HCT116 (cell line): ENCODE measurements at regions of chr2 and their contacts with region 1.

Region 1: DNA sequence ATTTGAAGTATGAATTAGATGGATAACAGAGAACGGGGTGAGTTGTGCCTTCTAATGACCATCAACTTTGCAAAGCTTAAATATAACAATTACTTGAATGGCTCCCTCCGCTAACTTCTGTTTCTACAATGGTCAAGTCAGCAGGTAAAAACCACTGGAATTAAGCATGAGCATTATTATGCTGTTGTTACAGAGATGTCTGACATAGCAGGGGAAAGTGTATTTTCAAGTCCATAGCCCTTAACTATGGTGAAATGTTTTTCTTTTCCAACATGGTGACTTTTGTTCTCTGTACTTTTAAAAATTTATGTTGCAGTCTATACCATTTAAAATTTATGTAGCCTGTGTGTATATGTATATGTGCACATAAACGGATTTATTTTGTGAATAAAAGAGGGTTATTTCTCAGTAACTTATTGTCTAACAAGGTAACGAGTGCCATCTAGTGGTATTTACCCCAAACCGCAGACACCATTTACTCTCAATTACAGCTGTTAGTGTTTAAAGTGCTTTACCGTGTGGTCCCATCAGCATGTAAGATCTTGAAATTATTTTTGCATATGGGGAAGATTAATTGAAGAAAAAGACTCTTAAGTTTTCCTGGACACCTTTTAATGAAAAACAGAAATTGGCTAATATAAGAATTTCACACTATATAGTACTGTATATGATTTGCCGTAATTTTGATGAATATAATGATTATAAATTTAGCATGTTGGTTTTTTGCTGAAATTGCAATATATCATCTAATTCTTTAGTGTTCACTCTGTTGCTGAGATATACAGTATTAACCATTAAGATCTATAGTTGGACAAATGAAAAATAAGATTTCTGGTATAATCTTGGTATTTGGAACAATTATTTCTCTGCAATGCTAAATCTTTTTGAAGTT is 78.2 kb downstream of the UBE2E3 start:
- DNase-seq: peak; percentile 47
- ATAC-seq: peak; percentile 63; the same call in 1 of the 2 replicates
- H3K4me3 ChIP-seq: no peak overlapping the region
- H3K27ac ChIP-seq: no peak overlapping the region
- H3K4me1 ChIP-seq: no peaks in the 10 kb centered on the region
- H3K27me3 ChIP-seq: no peaks in the 10 kb centered on the region
- CTCF ChIP-seq: peak; percentile 62 to 89 (median 64); a peak in 5 of 6 replicates
- POLR2A ChIP-seq: no peak
- RAD21 ChIP-seq: peak; percentile 86

Region 2: DNA sequence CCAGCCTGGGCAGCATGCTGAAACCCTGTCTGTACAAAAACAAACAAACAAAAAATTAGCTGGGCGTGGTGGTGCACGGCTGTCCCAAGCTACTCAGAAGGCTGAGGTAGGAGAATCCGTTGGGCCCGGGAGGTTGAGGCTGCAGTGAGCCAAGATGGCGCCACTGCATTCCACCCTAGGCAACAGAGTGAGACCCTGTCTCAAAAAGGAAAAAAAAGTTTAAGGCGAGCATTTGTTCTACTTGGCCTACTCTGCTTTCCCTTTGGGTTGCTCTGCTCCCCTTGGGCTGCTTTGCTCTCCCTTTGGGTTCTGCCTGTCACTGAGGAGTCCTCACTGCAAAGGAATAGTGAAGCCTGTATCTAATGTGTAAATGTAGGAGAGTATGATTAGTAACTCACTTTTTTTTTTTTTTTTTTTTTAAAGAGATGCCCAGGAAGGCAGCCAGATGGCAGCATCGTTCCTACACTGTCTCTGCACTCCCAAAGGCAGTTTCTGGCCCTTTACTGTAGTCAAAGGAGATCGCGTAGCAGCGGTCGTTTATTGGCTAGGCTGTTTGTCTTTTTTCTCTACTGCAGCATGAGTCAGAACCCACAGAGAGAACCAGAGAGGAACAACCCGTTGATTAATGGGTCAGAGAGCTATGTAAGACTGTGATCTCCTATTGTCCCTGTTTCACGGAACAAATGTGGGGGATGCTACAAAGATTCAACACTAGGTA is 933.2 kb before region 1 on chr2:
- CTCF ChIA-PET with region 1: interaction called, 13 read pairs
- POLR2A ChIA-PET with region 1: no interaction called
- RAD21 ChIA-PET with region 1: interaction called in 1 of 2 experiments, 3 read pairs
- intact Hi-C with region 1: loop called (anchors 1 kb)
- DNase-seq: peak; percentile 84
- ATAC-seq: peak; percentile 92
- H3K4me3 ChIP-seq: 0 out of 4 replicates have a peak overlapping the region, but pooled peaks of 1 of the 2 experiments have one; percentile 9
- H3K27ac ChIP-seq: no peak overlapping the region
- H3K4me1 ChIP-seq: peaks cover 0 to 14% of the 10 kb centered on the region in 2 experiments; a peak in 2 of 4 replicates
- H3K27me3 ChIP-seq: no peaks in the 10 kb centered on the region
- CTCF ChIP-seq: peak; percentile 65 to 75 (median 72); a peak in 5 of 6 replicates
- POLR2A ChIP-seq: no peak
- RAD21 ChIP-seq: peak; percentile 90

Region 3: GRCh38 chr2:180240774-180241173 is 817.9 kb before region 1 on chr2:
- CTCF ChIA-PET with region 1: no interaction called
- POLR2A ChIA-PET with region 1: no interaction called
- RAD21 ChIA-PET with region 1: no interaction called
- intact Hi-C with region 1: loop called (anchors 1 kb)
- DNase-seq: peak; percentile 10
- ATAC-seq: peak; percentile 67
- H3K4me3 ChIP-seq: no peak overlapping the region
- H3K27ac ChIP-seq: no peak overlapping the region
- H3K4me1 ChIP-seq: no peaks in the 10 kb centered on the region
- H3K27me3 ChIP-seq: no peaks in the 10 kb centered on the region
- CTCF ChIP-seq: peak; percentile 14 to 45 (median 37); a peak in 4 of 6 replicates
- POLR2A ChIP-seq: no peak
- RAD21 ChIP-seq: peak; percentile 73

Region 4: GRCh38 chr2:180359522-180360282 is 698.9 kb before region 1 on chr2:
- CTCF ChIA-PET with region 1: no interaction called
- POLR2A ChIA-PET with region 1: no interaction called
- RAD21 ChIA-PET with region 1: no interaction called
- intact Hi-C with region 1: loop called (anchors 10 kb)
- DNase-seq: peak; percentile 8
- ATAC-seq: peak; percentile 53; the same call in 1 of the 2 replicates
- H3K4me3 ChIP-seq: no peak overlapping the region
- H3K27ac ChIP-seq: no peak overlapping the region
- H3K4me1 ChIP-seq: no peaks in the 10 kb centered on the region
- H3K27me3 ChIP-seq: no peaks in the 10 kb centered on the region
- CTCF ChIP-seq: peak in 2 of 3 experiments; percentile 49 to 64; a peak in 4 of 6 replicates
- POLR2A ChIP-seq: no peak
- RAD21 ChIP-seq: no peak; the same call in 1 of the 2 replicates

Region 5: GRCh38 chr2:180520206-180520605 is 538.4 kb before region 1 on chr2:
- CTCF ChIA-PET with region 1: interaction called, 8 read pairs
- POLR2A ChIA-PET with region 1: no interaction called
- RAD21 ChIA-PET with region 1: interaction called in 1 of 2 experiments, 5 read pairs
- intact Hi-C with region 1: loop called (anchors 2 kb)
- DNase-seq: peak; percentile 33
- ATAC-seq: peak; percentile 70
- H3K4me3 ChIP-seq: no peak overlapping the region
- H3K27ac ChIP-seq: no peak overlapping the region
- H3K4me1 ChIP-seq: peaks cover 6 to 58% of the 10 kb centered on the region in 2 experiments; a peak in 3 of 4 replicates
- H3K27me3 ChIP-seq: no peaks in the 10 kb centered on the region
- CTCF ChIP-seq: peak; percentile 11 to 25 (median 18); a peak in 1 of 6 replicates
- POLR2A ChIP-seq: no peak
- RAD21 ChIP-seq: peak; percentile 62

Region 6: GRCh38 chr2:180607514-180608049 is 451.0 kb before region 1 on chr2:
- CTCF ChIA-PET with region 1: interaction called, 3 read pairs
- POLR2A ChIA-PET with region 1: no interaction called
- RAD21 ChIA-PET with region 1: no interaction called
- intact Hi-C with region 1: loop called (anchors 2 kb)
- DNase-seq: no peak
- ATAC-seq: no peak
- H3K4me3 ChIP-seq: no peak overlapping the region
- H3K27ac ChIP-seq: no peak overlapping the region
- H3K4me1 ChIP-seq: no peaks in the 10 kb centered on the region
- H3K27me3 ChIP-seq: no peaks in the 10 kb centered on the region
- CTCF ChIP-seq: no peak
- POLR2A ChIP-seq: no peak
- RAD21 ChIP-seq: no peak

Region 7: GRCh38 chr2:180980106-180980942 is 78.3 kb before region 1 on chr2 and contains the start of gene UBE2E3:
- CTCF ChIA-PET with region 1: no interaction called
- POLR2A ChIA-PET with region 1: no interaction called
- RAD21 ChIA-PET with region 1: no interaction called
- intact Hi-C with region 1: loop called (anchors 1 kb)
- DNase-seq: peak; percentile 48
- ATAC-seq: peak; percentile 86
- H3K4me3 ChIP-seq: peak within 1 kb of the TSS; percentile 87 to 88
- H3K27ac ChIP-seq: peak within 1 kb of the TSS; percentile 56
- H3K4me1 ChIP-seq: peaks cover 19 to 34% of the 10 kb centered on the region in 2 experiments; a peak in 3 of 4 replicates
- H3K27me3 ChIP-seq: no peaks in the 10 kb centered on the region
- CTCF ChIP-seq: peak in 2 of 3 experiments; percentile 62 to 65; a peak in 4 of 6 replicates
- POLR2A ChIP-seq: no peak
- RAD21 ChIP-seq: peak; percentile 34; the same call in 1 of the 2 replicates
- total RNA-seq, gene UBE2E3: 64.2 TPM

Region 8: GRCh38 chr2:181326661-181327060 is 268.0 kb after region 1 on chr2:
- CTCF ChIA-PET with region 1: no interaction called
- POLR2A ChIA-PET with region 1: no interaction called
- RAD21 ChIA-PET with region 1: no interaction called
- intact Hi-C with region 1: no loop called
- DNase-seq: no peak
- ATAC-seq: no peak
- H3K4me3 ChIP-seq: no peak overlapping the region
- H3K27ac ChIP-seq: no peak overlapping the region
- H3K4me1 ChIP-seq: no peaks in the 10 kb centered on the region
- H3K27me3 ChIP-seq: no peaks in the 10 kb centered on the region
- CTCF ChIP-seq: no peak
- POLR2A ChIP-seq: no peak
- RAD21 ChIP-seq: no peak